Heart left ventricle (tissue), 16 donors: ENCODE measurements at regions of chr2 and their contacts with region 1.

Region 1: DNA sequence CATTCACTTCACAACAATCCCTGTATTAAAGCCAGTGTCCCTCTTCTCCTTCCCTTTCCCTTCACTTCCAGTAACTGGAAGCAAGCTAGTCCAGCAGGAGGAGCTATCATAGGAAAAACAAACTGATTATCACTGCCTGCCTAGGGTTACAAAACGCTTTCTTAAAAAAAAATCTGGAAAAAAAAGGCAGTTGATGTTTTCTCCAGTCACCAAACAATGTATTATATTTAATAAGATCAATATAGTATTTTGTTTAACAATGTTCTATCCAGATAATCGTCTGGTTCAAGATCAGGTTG is 78.8 kb upstream of the ITGB6 start:
- DNase-seq: no peak
- ATAC-seq: peak in 3 of 4 donors; percentile 69 to 74 (median 70)
- H3K4me3 ChIP-seq: no peak overlapping the region
- H3K27ac ChIP-seq: peak overlapping the region in 6 of 12 donors; percentile 28 to 83 (median 41)
- H3K4me1 ChIP-seq: peaks cover 0 to 45% (median 15%) of the 10 kb centered on the region in 12 donors
- H3K27me3 ChIP-seq: no peaks in the 10 kb centered on the region
- CTCF ChIP-seq: peak; percentile 18 to 75 (median 52)
- POLR2A ChIP-seq: no peak

Region 2: DNA sequence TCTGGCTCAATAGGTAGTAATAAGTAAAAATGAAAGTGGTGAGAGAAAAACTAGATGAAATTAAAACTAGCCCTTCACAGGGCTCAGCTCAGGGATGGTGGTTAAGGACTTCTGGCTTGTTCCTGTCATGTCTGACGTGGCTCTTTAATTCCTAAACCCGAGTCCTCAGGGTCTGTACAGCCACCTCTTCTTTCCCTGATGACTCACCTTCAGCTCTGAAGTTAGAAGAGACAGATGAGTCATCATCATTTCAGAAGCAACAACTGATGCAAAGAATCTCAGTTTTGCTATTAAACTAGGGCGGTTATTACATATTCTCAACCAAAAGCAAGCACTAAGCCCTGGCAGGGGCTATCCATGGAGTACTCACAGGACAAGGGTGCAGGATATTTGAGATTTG is 54.8 kb before region 1 on chr2:
- intact Hi-C with region 1: no loop called
- DNase-seq: no peak
- ATAC-seq: no peak
- H3K4me3 ChIP-seq: no peak overlapping the region
- H3K27ac ChIP-seq: peak overlapping the region in 2 of 12 donors; percentile 22 to 34
- H3K4me1 ChIP-seq: peaks cover 0 to 45% (median 19%) of the 10 kb centered on the region in 12 donors
- H3K27me3 ChIP-seq: no peaks in the 10 kb centered on the region
- CTCF ChIP-seq: no peak
- POLR2A ChIP-seq: no peak

Region 3: DNA sequence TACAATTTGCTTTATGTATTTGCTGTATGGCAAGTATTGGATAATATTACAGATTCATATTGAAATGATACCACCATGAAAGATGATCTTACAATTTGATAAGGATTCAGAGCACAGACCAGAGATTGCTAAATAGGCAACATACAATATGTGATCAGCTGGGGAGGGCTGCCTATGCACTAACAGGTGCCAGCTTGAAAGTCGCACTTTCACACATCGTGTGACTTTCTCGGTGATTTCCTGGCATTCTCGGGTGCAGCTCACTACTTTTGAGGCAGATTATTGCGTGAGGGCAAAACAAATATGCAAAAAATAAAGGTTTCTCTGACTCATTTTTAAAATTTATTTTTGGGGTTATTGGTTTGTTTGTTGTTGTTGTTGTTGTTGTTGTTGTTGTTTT is 178.8 kb after region 1 on chr2:
- intact Hi-C with region 1: no loop called
- DNase-seq: no peak
- ATAC-seq: no peak
- H3K4me3 ChIP-seq: no peak overlapping the region
- H3K27ac ChIP-seq: peak overlapping the region in 1 of 12 donors; percentile 40
- H3K4me1 ChIP-seq: peaks cover 5 to 76% (median 45%) of the 10 kb centered on the region in 12 donors
- H3K27me3 ChIP-seq: no peaks in the 10 kb centered on the region
- CTCF ChIP-seq: no peak
- POLR2A ChIP-seq: no peak

Region 4: GRCh38 chr2:160970052-160970965 is 691.5 kb after region 1 on chr2:
- intact Hi-C with region 1: loop called in 4 of 10 experiments (anchors 5 to 10 kb)
- DNase-seq: peak in 2 of 5 donors; percentile 29 to 30
- ATAC-seq: peak in 3 of 4 donors; percentile 58 to 75 (median 69)
- H3K4me3 ChIP-seq: peak overlapping the region in 9 of 12 donors; percentile 17 to 38 (median 29)
- H3K27ac ChIP-seq: peak overlapping the region in 11 of 12 donors; percentile 22 to 76 (median 63)
- H3K4me1 ChIP-seq: peaks cover 0 to 23% (median 10%) of the 10 kb centered on the region in 12 donors
- H3K27me3 ChIP-seq: no peaks in the 10 kb centered on the region
- CTCF ChIP-seq: peak; percentile 63 to 87 (median 80)
- POLR2A ChIP-seq: no peak